Activated CD4-positive, alpha-beta memory T cell treated with anti-CD3 and anti-CD28 coated beads for 36 hours (primary cell): ENCODE measurements at regions of chr16 and their contacts with region 1.

Region 1: GRCh38 chr16:27367461-27368357 is 34.3 kb upstream of the IL21R start:
- DNase-seq: peak; percentile 95
- H3K4me3 Mint-ChIP-seq: peak overlapping the region; percentile 54
- H3K27ac Mint-ChIP-seq: peak overlapping the region; percentile 98
- H3K4me1 Mint-ChIP-seq: peaks cover 70% of the 10 kb centered on the region
- H3K27me3 Mint-ChIP-seq: no peaks in the 10 kb centered on the region

Region 2: GRCh38 chr16:27154705-27155521 is 212.8 kb before region 1 on chr16:
- CTCF ChIA-PET with region 1: interaction called, 35 read pairs
- POLR2A ChIA-PET with region 1: no interaction called
- intact Hi-C with region 1: loop called (anchors 1 kb)
- DNase-seq: peak; percentile 78
- H3K4me3 Mint-ChIP-seq: no peak overlapping the region
- H3K27ac Mint-ChIP-seq: no peak overlapping the region
- H3K4me1 Mint-ChIP-seq: peaks cover 6% of the 10 kb centered on the region
- H3K27me3 Mint-ChIP-seq: no peaks in the 10 kb centered on the region

Region 3: DNA sequence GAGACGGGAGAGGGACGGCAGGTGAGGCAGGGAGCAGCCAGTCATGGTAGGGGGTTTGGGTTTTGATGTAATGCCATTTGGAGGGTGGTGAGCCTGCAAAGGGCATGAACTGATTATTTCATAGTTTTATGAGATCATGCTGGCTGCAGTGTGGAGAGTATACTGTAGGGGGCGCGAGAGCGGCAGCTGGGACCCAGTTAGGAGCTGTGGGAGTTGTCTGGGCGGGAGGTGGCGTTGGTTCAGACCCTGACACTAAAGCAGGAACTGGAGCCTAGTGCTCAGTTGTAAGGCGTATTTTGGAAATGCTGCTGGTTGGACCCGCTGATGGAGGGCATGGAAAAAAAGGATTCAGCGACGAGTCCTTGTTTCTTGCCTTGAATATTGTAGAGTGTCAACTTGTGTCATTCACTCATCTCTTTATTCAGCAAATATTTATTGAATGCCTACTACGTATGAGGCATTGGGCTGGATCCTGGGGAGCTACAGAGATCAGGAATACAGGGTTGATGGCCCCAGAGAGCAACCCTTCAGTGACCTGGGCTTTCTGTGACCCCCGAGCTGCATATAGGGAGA is 188.1 kb before region 1 on chr16:
- CTCF ChIA-PET with region 1: interaction called, 73 read pairs
- POLR2A ChIA-PET with region 1: no interaction called
- intact Hi-C with region 1: loop called (anchors 1 kb)
- DNase-seq: peak; percentile 94
- H3K4me3 Mint-ChIP-seq: peak overlapping the region; percentile 39
- H3K27ac Mint-ChIP-seq: peak overlapping the region; percentile 48
- H3K4me1 Mint-ChIP-seq: peaks cover 36% of the 10 kb centered on the region
- H3K27me3 Mint-ChIP-seq: no peaks in the 10 kb centered on the region

Region 4: GRCh38 chr16:27253526-27253930 is 114.2 kb before region 1 on chr16:
- CTCF ChIA-PET with region 1: interaction called, 5 read pairs
- POLR2A ChIA-PET with region 1: no interaction called
- intact Hi-C with region 1: loop called (anchors 5 kb)
- DNase-seq: no peak
- H3K4me3 Mint-ChIP-seq: peak overlapping the region; percentile 47
- H3K27ac Mint-ChIP-seq: peak overlapping the region; percentile 90
- H3K4me1 Mint-ChIP-seq: peaks cover 86% of the 10 kb centered on the region
- H3K27me3 Mint-ChIP-seq: no peaks in the 10 kb centered on the region

Region 5: GRCh38 chr16:27318392-27319226 is 49.1 kb before region 1 on chr16:
- CTCF ChIA-PET with region 1: interaction called, 15 read pairs
- POLR2A ChIA-PET with region 1: interaction called, 58 read pairs
- intact Hi-C with region 1: loop called (anchors 1 kb)
- DNase-seq: peak; percentile 79
- H3K4me3 Mint-ChIP-seq: peak overlapping the region; percentile 94
- H3K27ac Mint-ChIP-seq: peak overlapping the region; percentile 96
- H3K4me1 Mint-ChIP-seq: peaks cover 76% of the 10 kb centered on the region
- H3K27me3 Mint-ChIP-seq: no peaks in the 10 kb centered on the region

Region 6: DNA sequence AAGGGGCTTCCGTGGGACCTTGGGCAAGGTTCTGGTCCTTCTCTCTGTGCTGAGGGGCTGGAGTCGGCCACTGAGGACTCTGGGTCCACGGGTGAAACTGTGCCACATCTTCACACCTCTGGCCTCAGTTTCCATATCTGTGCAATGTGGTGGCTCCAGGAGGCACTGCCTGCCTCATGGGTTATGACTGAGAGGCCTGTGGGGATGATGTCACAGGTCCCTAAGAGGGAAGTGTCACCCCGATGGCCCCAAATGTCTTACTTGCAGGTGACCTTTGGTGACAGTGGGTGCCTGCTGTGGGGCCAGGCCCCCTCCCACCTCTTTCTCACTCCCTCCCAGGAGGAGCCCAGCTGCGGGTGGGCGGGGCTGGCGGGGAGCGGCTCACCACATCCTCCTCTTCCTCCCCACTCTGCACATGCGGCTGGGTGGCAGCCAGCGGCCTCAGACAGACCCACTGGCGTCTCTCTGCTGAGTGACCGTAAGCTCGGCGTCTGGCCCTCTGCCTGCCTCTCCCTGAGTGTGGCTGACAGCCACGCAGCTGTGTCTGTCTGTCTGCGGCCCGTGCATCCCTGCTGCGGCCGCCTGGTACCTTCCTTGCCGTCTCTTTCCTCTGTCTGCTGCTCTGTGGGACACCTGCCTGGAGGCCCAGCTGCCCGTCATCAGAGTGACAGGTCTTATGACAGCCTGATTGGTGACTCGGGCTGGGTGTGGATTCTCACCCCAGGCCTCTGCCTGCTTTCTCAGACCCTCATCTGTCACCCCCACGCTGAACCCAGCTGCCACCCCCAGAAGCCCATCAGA is 34.3 kb after region 1 on chr16 and contains the start of gene IL21R:
- CTCF ChIA-PET with region 1: interaction called, 75 read pairs
- POLR2A ChIA-PET with region 1: interaction called, 87 read pairs
- intact Hi-C with region 1: no loop called
- DNase-seq: peak; percentile 93
- H3K4me3 Mint-ChIP-seq: peak within 1 kb of the TSS; percentile 100
- H3K27ac Mint-ChIP-seq: peak within 1 kb of the TSS; percentile 96
- H3K4me1 Mint-ChIP-seq: peaks cover 43% of the 10 kb centered on the region
- H3K27me3 Mint-ChIP-seq: no peaks in the 10 kb centered on the region
- total RNA-seq, gene IL21R: 55.0 to 55.9 TPM

Region 7: GRCh38 chr16:27455700-27456099 is 88.0 kb after region 1 on chr16:
- CTCF ChIA-PET with region 1: interaction called, 11 read pairs
- POLR2A ChIA-PET with region 1: interaction called, 8 read pairs
- intact Hi-C with region 1: loop called (anchors 2 kb)
- DNase-seq: peak; percentile 50
- H3K4me3 Mint-ChIP-seq: no peak overlapping the region
- H3K27ac Mint-ChIP-seq: peak overlapping the region; percentile 35
- H3K4me1 Mint-ChIP-seq: peaks cover 57% of the 10 kb centered on the region
- H3K27me3 Mint-ChIP-seq: no peaks in the 10 kb centered on the region